Endothelial cell of umbilical vein (primary cell): ENCODE measurements at regions of chr17 and their contacts with region 1.

Region 1: DNA sequence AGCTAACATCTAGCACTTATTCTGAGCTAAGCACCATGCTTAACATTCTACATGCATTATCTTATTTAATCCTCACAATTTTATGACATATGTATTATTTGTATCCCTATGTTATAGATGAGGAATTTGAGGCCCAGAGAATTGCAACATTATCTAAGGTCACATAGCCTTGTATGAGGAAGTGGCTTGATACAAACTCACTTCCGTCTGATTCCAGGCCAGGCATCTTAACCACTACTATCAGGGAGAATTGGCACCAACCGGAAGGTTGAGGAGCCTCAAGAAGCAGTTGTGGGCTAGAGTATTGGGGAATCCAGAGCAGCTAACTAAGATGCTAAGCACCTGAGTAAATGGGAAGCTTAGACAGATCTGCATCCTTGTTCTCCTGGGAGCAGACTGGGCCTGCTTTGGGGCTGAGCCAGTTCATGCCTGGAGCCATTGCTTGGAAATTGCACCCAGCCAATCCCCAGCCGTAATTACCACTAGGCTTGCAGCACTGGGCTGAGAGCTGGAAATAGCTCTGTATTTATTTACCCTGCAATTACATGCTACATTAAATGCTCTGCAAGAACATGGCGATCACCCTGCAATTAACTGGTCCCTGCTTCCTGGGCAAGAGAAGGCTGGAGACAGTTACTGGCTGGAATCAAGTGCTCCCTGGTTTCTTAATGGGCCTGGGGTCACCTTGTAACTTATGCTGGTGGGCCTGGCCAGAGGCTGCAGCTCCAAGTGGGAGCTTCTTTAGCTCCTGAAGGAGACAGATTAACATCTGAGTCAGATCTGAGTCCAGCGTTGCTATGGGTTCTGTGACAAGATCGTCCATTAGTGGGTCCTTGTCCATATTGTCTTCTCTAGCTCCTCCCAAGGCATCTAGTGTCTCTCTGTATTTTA is 273.1 kb upstream of the CCL2 start:
- DNase-seq: no peak
- H3K4me3 ChIP-seq: no peak overlapping the region
- H3K27ac ChIP-seq: no peak overlapping the region
- H3K4me1 ChIP-seq: no peaks in the 10 kb centered on the region
- H3K27me3 ChIP-seq: no peaks in the 10 kb centered on the region
- CTCF ChIP-seq: no peak
- POLR2A ChIP-seq: no peak

Region 2: DNA sequence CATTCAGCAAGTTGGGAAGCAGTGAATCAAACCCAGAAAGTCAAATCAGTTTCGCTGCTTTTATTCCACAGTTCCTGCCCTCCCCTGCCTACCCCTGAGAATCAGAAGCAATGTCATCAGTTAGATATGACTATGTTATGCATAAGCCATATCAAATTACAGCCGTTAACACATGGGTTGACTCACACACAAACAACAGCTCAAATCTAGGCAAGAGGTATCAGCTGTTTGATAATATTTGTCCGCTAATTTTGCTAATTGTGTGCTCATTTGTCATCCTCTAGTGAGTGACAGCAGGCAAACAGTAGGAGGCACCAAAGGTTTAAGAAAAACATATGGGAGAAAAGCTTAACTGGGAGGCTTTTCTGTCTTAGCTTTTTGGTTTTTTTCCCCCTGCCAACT is 54.2 kb before region 1 on chr17:
- CTCF ChIA-PET with region 1: no interaction called
- POLR2A ChIA-PET with region 1: no interaction called
- dilution Hi-C with region 1: no loop called
- intact Hi-C with region 1: loop called (anchors 10 kb)
- DNase-seq: no peak
- H3K4me3 ChIP-seq: no peak overlapping the region
- H3K27ac ChIP-seq: no peak overlapping the region
- H3K4me1 ChIP-seq: no peaks in the 10 kb centered on the region
- H3K27me3 ChIP-seq: no peaks in the 10 kb centered on the region
- CTCF ChIP-seq: no peak
- POLR2A ChIP-seq: no peak

Region 3: GRCh38 chr17:33949100-33949499 is 32.9 kb before region 1 on chr17:
- CTCF ChIA-PET with region 1: no interaction called
- POLR2A ChIA-PET with region 1: no interaction called
- dilution Hi-C with region 1: no loop called
- intact Hi-C with region 1: no loop called
- DNase-seq: no peak
- H3K4me3 ChIP-seq: no peak overlapping the region
- H3K27ac ChIP-seq: no peak overlapping the region
- H3K4me1 ChIP-seq: no peaks in the 10 kb centered on the region
- H3K27me3 ChIP-seq: no peaks in the 10 kb centered on the region
- CTCF ChIP-seq: peak in 1 of 2 donors; percentile 16
- POLR2A ChIP-seq: no peak

Region 4: DNA sequence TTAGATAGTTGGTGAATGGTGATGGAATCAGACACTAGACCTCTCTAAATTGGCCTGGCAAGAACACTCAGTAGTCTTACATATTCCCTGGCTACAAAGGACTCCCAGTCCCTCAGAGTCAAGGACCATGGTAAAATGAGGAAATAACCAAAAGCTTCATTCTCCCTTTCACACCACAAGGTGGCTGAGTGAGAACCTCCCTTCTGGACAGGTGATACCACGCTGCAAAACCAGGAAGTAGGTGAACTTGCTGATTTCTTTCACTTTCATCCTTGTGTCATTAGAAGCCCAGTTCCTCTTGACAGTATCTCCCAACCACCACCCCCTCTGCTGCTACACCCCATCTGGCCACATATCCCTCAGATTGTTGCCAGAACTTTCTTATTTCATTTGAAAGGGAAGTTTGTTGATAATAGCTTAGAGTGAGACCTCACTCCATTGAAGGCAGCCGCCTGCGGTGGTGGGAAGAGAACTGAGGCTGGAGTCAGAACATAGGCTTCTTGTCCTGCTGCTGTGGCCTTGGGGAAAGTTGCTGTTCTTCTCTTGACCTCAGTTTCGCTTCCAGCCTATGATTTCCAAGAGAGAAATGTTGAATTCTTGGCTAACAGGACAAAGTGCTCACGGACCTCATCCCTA is 17.5 kb before region 1 on chr17:
- CTCF ChIA-PET with region 1: no interaction called
- POLR2A ChIA-PET with region 1: no interaction called
- dilution Hi-C with region 1: no loop called
- intact Hi-C with region 1: no loop called
- DNase-seq: no peak
- H3K4me3 ChIP-seq: no peak overlapping the region
- H3K27ac ChIP-seq: no peak overlapping the region
- H3K4me1 ChIP-seq: no peaks in the 10 kb centered on the region
- H3K27me3 ChIP-seq: no peaks in the 10 kb centered on the region
- CTCF ChIP-seq: no peak
- POLR2A ChIP-seq: no peak